H1 (cell line): ENCODE measurements at regions of chr16 and their contacts with region 1.

Region 1: DNA sequence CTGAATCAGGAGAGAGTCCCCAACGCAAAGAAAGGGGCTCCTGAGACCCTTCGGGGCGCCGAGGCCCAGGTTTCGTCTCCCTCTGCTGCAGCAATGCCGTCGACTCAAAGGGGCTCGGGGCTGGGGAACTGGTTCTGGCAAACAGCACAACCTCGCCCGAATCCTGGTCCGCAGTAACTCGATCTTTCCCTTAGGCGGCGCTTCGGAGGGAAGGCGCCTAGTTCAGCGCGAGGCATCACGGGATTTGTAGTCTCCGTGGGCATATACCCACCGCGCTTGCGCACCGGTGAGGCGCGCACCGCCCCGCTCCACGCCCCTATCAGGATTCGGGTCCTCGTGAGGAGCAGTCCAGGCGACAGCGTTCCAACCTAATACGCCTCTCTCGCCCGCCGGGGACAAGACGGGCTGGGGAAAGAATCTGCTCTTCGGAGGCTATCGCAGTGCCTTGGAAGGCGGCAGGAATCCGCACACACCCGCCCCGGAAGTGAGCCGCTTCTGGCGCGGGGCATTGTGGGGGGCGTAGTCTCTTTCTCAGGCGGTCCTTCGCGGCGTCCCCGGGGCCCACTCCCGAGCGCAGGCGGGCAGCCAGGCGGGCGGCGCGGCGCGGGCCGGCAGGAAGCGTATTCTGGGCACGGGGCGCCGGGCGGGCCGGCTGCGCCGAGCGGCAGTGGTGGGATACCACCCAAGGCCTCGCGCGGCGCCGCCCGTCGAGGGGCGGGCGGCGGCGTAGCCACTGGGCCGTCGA is at the start of gene THAP11:
- DNase-seq: peak; percentile 91 to 97
- H3K4me3 ChIP-seq: peak within 1 kb of the TSS; percentile 84 to 97 (median 95)
- H3K27ac ChIP-seq: peak within 1 kb of the TSS; percentile 97
- H3K4me1 ChIP-seq: peaks cover 8 to 32% (median 17%) of the 10 kb centered on the region in 4 experiments
- H3K27me3 ChIP-seq: no peaks in the 10 kb centered on the region
- CTCF ChIP-seq: peak; percentile 81 to 94 (median 87)
- EP300 ChIP-seq: no peak
- POLR2A ChIP-seq: peak; percentile 83 to 93
- RAD21 ChIP-seq: peak; percentile 24 to 38; a peak in 3 of 4 replicates
- total RNA-seq, gene THAP11: 54.8 and 56.4 TPM in 2 replicates

Region 2: GRCh38 chr16:67490335-67491096 is 351.4 kb before region 1 on chr16:
- CTCF ChIA-PET with region 1: no interaction called
- POLR2A ChIA-PET with region 1: no interaction called
- DNase-seq: no peak
- H3K4me3 ChIP-seq: no peak overlapping the region
- H3K27ac ChIP-seq: no peak overlapping the region
- H3K4me1 ChIP-seq: peaks cover 0 to 7% (median 4%) of the 10 kb centered on the region in 4 experiments; a peak in 5 of 7 replicates
- H3K27me3 ChIP-seq: peaks cover 48 to 68% (median 64%) of the 10 kb centered on the region in 4 experiments
- CTCF ChIP-seq: no peak
- EP300 ChIP-seq: no peak
- POLR2A ChIP-seq: no peak
- RAD21 ChIP-seq: no peak

Region 3: GRCh38 chr16:67781565-67781921 is 60.4 kb before region 1 on chr16:
- CTCF ChIA-PET with region 1: no interaction called
- POLR2A ChIA-PET with region 1: no interaction called
- DNase-seq: no peak
- H3K4me3 ChIP-seq: no peak overlapping the region
- H3K27ac ChIP-seq: no peak overlapping the region
- H3K4me1 ChIP-seq: peaks cover 0 to 2% (median 0%) of the 10 kb centered on the region in 4 experiments; a peak in 1 of 7 replicates
- H3K27me3 ChIP-seq: no peaks in the 10 kb centered on the region
- CTCF ChIP-seq: no peak
- EP300 ChIP-seq: no peak
- POLR2A ChIP-seq: no peak
- RAD21 ChIP-seq: no peak

Region 4: GRCh38 chr16:67816240-67817031 is 25.5 kb before region 1 on chr16:
- CTCF ChIA-PET with region 1: interaction called, 33 read pairs
- POLR2A ChIA-PET with region 1: interaction called, 4 read pairs
- DNase-seq: peak; percentile 25 to 99
- H3K4me3 ChIP-seq: no peak overlapping the region
- H3K27ac ChIP-seq: no peak overlapping the region
- H3K4me1 ChIP-seq: no peaks in the 10 kb centered on the region
- H3K27me3 ChIP-seq: no peaks in the 10 kb centered on the region; a peak in 1 of 7 replicates
- CTCF ChIP-seq: peak; percentile 98 to 100 (median 99)
- EP300 ChIP-seq: no peak
- POLR2A ChIP-seq: no peak
- RAD21 ChIP-seq: peak; percentile 78 to 86

Region 5: GRCh38 chr16:67822511-67822910 is 19.4 kb before region 1 on chr16:
- CTCF ChIA-PET with region 1: interaction called, 10 read pairs
- POLR2A ChIA-PET with region 1: interaction called, 15 read pairs
- DNase-seq: no peak
- H3K4me3 ChIP-seq: no peak overlapping the region
- H3K27ac ChIP-seq: no peak overlapping the region
- H3K4me1 ChIP-seq: peaks cover 0 to 2% (median 0%) of the 10 kb centered on the region in 4 experiments; a peak in 3 of 7 replicates
- H3K27me3 ChIP-seq: no peaks in the 10 kb centered on the region; a peak in 1 of 7 replicates
- CTCF ChIP-seq: no peak
- EP300 ChIP-seq: no peak
- POLR2A ChIP-seq: no peak
- RAD21 ChIP-seq: no peak

Region 6: GRCh38 chr16:67857502-67858233 is 15.7 kb after region 1 on chr16:
- CTCF ChIA-PET with region 1: interaction called, 123 read pairs
- POLR2A ChIA-PET with region 1: interaction called, 100 read pairs
- DNase-seq: no peak
- H3K4me3 ChIP-seq: peak overlapping the region in 2 of 4 experiments; percentile 17 to 19; a peak in 3 of 8 replicates
- H3K27ac ChIP-seq: peak overlapping the region; percentile 84
- H3K4me1 ChIP-seq: peaks cover 8 to 15% (median 13%) of the 10 kb centered on the region in 4 experiments
- H3K27me3 ChIP-seq: no peaks in the 10 kb centered on the region
- CTCF ChIP-seq: no peak
- EP300 ChIP-seq: peak in 1 of 2 experiments; percentile 87; a peak in 1 of 3 replicates
- POLR2A ChIP-seq: no peak
- RAD21 ChIP-seq: no peak

Region 7: DNA sequence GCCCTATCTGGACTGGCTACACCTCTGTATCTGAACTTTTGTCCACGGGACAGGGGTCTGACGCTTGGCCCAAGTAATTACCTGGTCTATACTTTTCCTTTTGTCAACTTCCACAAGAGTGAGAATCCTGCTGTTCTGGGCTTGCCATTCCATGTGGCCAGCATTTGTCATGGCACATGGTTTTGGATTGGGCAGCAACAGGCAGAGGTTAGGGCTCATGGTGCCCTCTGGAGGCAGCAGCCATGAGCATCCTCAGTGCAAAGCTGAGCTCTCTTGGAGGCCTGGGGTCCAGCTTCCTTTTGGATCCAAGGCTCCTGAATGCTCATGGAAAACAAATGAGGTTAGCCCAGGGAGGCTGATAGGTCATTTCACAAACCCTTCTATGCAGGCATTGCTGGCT is 23.4 kb after region 1 on chr16:
- CTCF ChIA-PET with region 1: interaction called, 123 read pairs
- POLR2A ChIA-PET with region 1: interaction called, 100 read pairs
- DNase-seq: no peak
- H3K4me3 ChIP-seq: no peak overlapping the region
- H3K27ac ChIP-seq: no peak overlapping the region
- H3K4me1 ChIP-seq: peaks cover 0 to 4% (median 0%) of the 10 kb centered on the region in 4 experiments; a peak in 2 of 7 replicates
- H3K27me3 ChIP-seq: no peaks in the 10 kb centered on the region
- CTCF ChIP-seq: peak; percentile 76 to 83 (median 79)
- EP300 ChIP-seq: no peak
- POLR2A ChIP-seq: no peak
- RAD21 ChIP-seq: peak; percentile 80 to 82

Region 8: GRCh38 chr16:67872786-67873537 is 31.0 kb after region 1 on chr16 and contains the start of gene EDC4:
- CTCF ChIA-PET with region 1: interaction called, 123 read pairs
- POLR2A ChIA-PET with region 1: interaction called, 19 read pairs
- DNase-seq: peak in 1 of 2 experiments; percentile 92
- H3K4me3 ChIP-seq: peak within 1 kb of the TSS; percentile 85 to 97 (median 93)
- H3K27ac ChIP-seq: peak within 1 kb of the TSS; percentile 53
- H3K4me1 ChIP-seq: peaks cover 0 to 7% (median 3%) of the 10 kb centered on the region in 4 experiments; a peak in 3 of 7 replicates
- H3K27me3 ChIP-seq: no peaks in the 10 kb centered on the region
- CTCF ChIP-seq: no peak; a peak in 1 of 4 replicates
- EP300 ChIP-seq: no peak; a peak in 1 of 3 replicates
- POLR2A ChIP-seq: peak in 1 of 2 experiments; percentile 74; a peak in 2 of 3 replicates
- RAD21 ChIP-seq: peak in 1 of 2 experiments; percentile 2; a peak in 1 of 4 replicates
- total RNA-seq, gene EDC4: 72.7 and 73.4 TPM in 2 replicates